GM10248 (cell line): ENCODE measurements at regions of chr10 and their contacts with region 1.

Region 1: GRCh38 chr10:83539528-83540308 is 599.6 kb upstream of the GHITM start:
- DNase-seq: no peak
- CTCF ChIP-seq: no peak

Region 2: DNA sequence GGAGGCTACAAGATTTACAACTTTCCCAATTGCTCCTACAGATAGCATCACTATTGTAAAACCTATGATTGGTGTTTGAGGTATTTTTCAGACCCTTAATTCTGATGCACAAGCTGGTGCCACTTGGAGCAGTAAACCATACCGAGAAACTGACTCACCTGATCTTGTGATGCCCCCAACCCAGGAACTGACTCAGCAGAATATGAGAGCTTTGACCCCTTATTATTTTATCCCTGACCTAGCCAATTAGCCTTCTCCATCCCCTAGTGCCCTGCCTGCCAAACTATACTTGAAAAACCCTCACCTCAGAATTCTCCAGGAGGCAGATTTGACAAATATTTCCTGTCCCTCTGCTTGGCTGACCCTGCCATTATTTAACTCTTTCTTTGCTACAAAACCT is 13.6 kb after region 1 on chr10:
- CTCF ChIA-PET with region 1: interaction called, 10 read pairs
- POLR2A ChIA-PET with region 1: no interaction called
- DNase-seq: no peak
- CTCF ChIP-seq: no peak